ENCODE measurements at regions of chr16 and their contacts with region 1.

Region 1: DNA sequence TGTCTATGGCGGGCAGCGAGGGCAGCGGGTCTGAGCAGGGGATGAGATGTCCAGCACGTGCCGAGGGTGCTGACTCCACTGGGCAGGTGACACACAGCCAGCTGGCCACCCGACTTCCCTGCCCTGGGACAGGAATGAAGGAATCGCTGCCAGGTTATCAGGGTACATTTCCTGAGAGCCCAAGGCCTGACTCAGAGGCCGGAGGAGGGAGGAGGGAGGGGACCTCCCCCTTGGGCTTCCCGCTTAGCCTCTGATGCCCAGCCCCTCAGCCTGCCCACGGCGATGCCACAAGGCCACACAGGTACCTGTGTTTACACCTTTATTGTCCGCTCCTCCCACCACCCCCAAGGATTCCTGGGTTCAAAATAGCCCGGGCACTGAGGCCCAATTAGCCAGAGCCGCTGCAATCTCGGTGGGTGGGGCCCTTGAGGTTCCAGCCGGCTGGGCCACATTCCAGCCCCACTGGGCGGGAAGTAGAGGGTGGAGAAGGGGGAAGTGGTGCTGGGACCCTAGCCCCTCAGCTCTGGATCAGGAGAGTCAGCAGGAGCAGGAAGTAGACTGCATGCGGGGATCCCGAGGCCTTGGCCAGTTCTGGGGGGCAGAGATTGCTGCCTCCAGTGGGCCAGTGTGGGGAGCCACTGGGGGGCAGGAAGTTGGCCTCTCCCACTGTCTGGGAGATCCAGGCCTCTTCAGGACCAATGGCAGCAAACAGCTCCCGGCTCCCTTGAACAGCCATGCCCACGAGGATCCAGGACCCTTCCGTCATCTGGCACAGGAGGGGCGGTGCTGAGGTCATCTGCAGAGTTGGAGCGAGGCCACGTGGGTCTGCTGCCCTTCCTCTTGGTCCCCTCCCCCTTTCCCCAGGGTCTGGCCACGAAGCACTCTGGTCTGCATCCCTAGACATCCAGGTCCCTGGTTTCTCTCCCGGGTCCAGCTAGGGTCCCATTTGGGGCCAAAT is 3.4 kb upstream of the PRSS8 start:
- DNase-seq: peak; percentile 84

Region 2: GRCh38 chr16:29745853-29746345 is 1393.0 kb before region 1 on chr16 and contains the start of gene C16orf54:
- intact Hi-C with region 1: loop called in 1 of 2 experiments (anchors 5 kb)
- DNase-seq: peak; percentile 95
- total RNA-seq, gene C16orf54: 1.1 to 2.5 TPM

Region 3: GRCh38 chr16:31286421-31287032 is 147.6 kb after region 1 on chr16:
- intact Hi-C with region 1: no loop called
- DNase-seq: no peak

Region 4: DNA sequence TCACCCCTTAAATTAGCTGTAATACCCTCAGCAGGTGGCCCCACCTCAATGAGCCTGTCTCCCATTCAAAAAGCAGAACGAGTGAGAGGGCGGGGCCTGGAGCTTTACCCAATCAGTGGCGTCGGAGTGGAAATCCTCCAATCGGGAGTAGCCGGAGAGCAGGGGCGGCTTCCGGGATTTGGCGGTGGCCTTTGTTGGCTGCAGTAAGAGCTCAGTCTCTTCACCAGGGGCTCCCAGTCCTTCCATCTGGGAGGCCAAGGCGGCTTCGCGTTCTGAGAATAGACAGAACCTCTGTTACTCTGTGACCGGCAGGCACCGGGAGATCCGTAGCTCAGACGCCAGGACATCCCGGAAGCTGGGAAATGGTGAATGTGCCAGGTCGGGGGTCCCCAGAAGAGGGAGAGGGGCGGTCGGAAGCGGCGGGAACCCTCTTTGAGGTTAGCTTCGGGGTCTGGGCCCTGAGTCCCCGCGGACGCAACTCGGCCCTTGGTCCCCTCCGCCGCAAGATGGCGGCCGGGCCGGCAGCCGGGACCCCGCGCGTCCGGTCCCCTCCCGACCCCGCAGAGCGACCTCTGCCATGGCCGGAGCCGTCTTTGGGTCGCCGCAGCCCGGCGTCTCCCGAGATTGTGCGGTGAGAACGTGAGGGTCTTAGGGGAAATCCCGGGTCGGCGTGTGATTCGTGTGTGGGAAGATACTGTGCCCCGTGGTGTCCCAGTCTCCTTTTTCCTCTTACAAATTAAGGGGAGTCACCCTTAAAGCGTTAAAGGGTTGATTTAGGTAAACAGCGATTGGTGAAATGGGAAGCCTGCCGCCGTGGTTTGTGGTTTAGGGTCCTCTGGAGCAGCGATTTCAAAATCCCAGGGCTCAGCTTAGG is 574.4 kb after region 1 on chr16:
- intact Hi-C with region 1: loop called in 1 of 2 experiments (anchors 5 kb)
- DNase-seq: peak; percentile 98

Measured in posterior vena cava (tissue), 2 donors.